ENCODE measurements at regions of chr12 and their contacts with region 1.

Region 1: GRCh38 chr12:91109148-91109564 is 2.1 kb downstream of the LUM start:
- DNase-seq: peak; percentile 19
- CTCF ChIP-seq: peak; percentile 56

Region 2: GRCh38 chr12:90959538-90960139 is 149.5 kb before region 1 on chr12:
- CTCF ChIA-PET with region 1: interaction called, 15 read pairs
- POLR2A ChIA-PET with region 1: no interaction called
- DNase-seq: peak; percentile 26
- CTCF ChIP-seq: peak; percentile 73

Region 3: GRCh38 chr12:90978117-90978770 is 130.9 kb before region 1 on chr12:
- CTCF ChIA-PET with region 1: interaction called, 85 read pairs
- POLR2A ChIA-PET with region 1: no interaction called
- DNase-seq: peak; percentile 14
- CTCF ChIP-seq: peak; percentile 48

Region 4: DNA sequence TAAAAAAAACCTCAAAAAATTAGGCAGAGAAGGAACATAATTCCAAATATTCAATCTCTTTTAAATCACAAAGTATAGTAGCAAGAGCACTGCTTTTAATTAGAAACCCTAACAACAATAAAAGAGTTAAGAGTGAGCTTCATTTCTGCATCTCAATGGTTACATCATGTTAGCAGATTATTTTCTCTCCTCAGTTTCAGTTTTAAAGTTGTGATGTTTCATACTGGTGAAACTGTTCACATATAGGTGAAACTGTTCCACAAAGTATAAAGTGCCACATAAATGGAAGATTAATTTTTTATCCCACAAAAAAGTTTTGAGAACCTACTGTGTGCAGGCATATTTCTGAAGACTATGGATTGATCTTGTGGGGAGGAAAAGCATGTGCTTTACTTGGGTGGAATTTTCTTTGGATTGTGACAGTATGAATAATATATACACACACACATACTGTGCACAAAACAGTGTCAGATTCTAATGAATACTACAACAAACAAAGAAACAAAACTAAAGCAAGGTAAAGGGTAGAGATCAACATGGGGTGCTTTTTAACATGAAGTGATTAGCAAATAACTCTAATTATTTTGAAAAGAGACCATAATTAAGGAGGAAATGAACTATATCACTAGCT is 15.0 kb before region 1 on chr12:
- CTCF ChIA-PET with region 1: interaction called, 8 read pairs
- POLR2A ChIA-PET with region 1: interaction called, 12 read pairs
- DNase-seq: no peak
- CTCF ChIP-seq: no peak

Region 5: GRCh38 chr12:91123236-91123916 is 14.2 kb after region 1 on chr12:
- CTCF ChIA-PET with region 1: interaction called, 18 read pairs
- POLR2A ChIA-PET with region 1: no interaction called
- DNase-seq: no peak
- CTCF ChIP-seq: no peak

Region 6: GRCh38 chr12:91355150-91356006 is 246.2 kb after region 1 on chr12:
- CTCF ChIA-PET with region 1: interaction called, 10 read pairs
- POLR2A ChIA-PET with region 1: no interaction called
- DNase-seq: peak; percentile 16
- CTCF ChIP-seq: peak; percentile 81

Measured in GM10248 (cell line).